HepG2 (cell line): ENCODE measurements at regions of chr7 and their contacts with region 1.

Region 1: GRCh38 chr7:94657771-94658693 is 2.1 kb upstream of the SGCE start:
- DNase-seq: peak; percentile 90
- ATAC-seq: peak; percentile 89
- H3K4me3 ChIP-seq: peak overlapping the region in 2 of 3 experiments; percentile 55 to 78
- H3K27ac ChIP-seq: peak overlapping the region; percentile 77
- H3K4me1 ChIP-seq: peaks cover 22% of the 10 kb centered on the region
- H3K27me3 ChIP-seq: no peaks in the 10 kb centered on the region
- CTCF ChIP-seq: peak; percentile 32
- EP300 ChIP-seq: no peak
- POLR2A ChIP-seq: peak in 1 of 2 experiments; percentile 44; a peak in 1 of 4 replicates
- RAD21 ChIP-seq: no peak

Region 2: DNA sequence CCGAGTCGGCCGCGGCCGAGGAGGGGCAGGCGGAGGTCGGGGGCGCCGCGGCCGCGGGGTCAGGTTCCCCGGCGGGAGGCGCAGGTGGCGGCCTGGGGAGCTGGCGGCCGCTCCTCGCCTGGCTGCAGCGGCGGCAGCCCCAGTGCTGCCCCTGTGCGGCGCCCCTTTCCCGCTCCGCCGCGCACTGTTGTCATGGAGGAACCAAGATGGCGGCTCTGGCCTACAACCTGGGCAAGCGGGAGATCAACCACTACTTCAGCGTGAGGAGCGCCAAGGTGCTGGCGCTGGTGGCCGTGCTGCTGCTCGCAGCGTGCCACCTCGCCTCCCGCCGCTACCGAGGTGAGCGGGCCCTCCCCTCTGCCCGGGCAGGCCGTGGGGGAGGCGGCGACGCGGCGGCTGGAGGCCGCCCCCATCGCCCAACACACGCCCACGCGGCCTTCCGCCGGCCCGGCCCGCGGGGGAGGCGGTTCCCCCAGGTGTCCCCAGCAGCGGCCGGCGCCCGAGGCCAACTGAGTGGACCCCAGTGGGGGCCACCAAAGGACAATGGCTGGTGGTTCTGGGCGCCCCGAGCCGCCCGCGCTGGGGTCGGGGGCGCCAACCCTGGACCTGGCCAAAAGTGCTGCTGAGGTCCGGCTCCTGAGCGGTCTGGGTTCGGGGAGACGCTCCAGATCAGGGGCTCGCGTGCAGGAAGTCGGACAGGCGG is 148.0 kb before region 1 on chr7:
- CTCF ChIA-PET with region 1: no interaction called
- POLR2A ChIA-PET with region 1: interaction called, 7 read pairs
- in situ Hi-C with region 1: no loop called
- intact Hi-C with region 1: loop called (anchors 1 kb)
- DNase-seq: peak; percentile 59
- ATAC-seq: peak; percentile 86
- H3K4me3 ChIP-seq: peak overlapping the region; percentile 66 to 83 (median 83)
- H3K27ac ChIP-seq: peak overlapping the region; percentile 96
- H3K4me1 ChIP-seq: peaks cover 73% of the 10 kb centered on the region
- H3K27me3 ChIP-seq: no peaks in the 10 kb centered on the region
- CTCF ChIP-seq: peak; percentile 45
- EP300 ChIP-seq: no peak
- POLR2A ChIP-seq: peak; percentile 77 to 80
- RAD21 ChIP-seq: peak; percentile 63

Region 3: GRCh38 chr7:94632338-94633013 is 25.6 kb before region 1 on chr7:
- CTCF ChIA-PET with region 1: no interaction called
- POLR2A ChIA-PET with region 1: interaction called, 23 read pairs
- in situ Hi-C with region 1: no loop called
- intact Hi-C with region 1: no loop called
- DNase-seq: no peak
- ATAC-seq: peak; percentile 72
- H3K4me3 ChIP-seq: peak overlapping the region in 1 of 3 experiments; percentile 3; a peak in 1 of 6 replicates
- H3K27ac ChIP-seq: peak overlapping the region; percentile 69
- H3K4me1 ChIP-seq: peaks cover 77% of the 10 kb centered on the region
- H3K27me3 ChIP-seq: no peaks in the 10 kb centered on the region
- CTCF ChIP-seq: no peak
- EP300 ChIP-seq: no peak
- POLR2A ChIP-seq: no peak
- RAD21 ChIP-seq: no peak

Region 4: GRCh38 chr7:94907026-94907810 is 249.2 kb after region 1 on chr7 and contains the start of gene PPP1R9A:
- CTCF ChIA-PET with region 1: no interaction called
- POLR2A ChIA-PET with region 1: interaction called, 5 read pairs
- in situ Hi-C with region 1: no loop called
- intact Hi-C with region 1: loop called (anchors 5 kb)
- DNase-seq: peak; percentile 63
- ATAC-seq: peak; percentile 87
- H3K4me3 ChIP-seq: peak within 1 kb of the TSS; percentile 66 to 88 (median 81)
- H3K27ac ChIP-seq: peak within 1 kb of the TSS; percentile 81
- H3K4me1 ChIP-seq: peaks cover 48% of the 10 kb centered on the region
- H3K27me3 ChIP-seq: no peaks in the 10 kb centered on the region; a peak in 1 of 5 replicates
- CTCF ChIP-seq: peak; percentile 70
- EP300 ChIP-seq: peak in 1 of 2 experiments; percentile 45; a peak in 1 of 4 replicates
- POLR2A ChIP-seq: 0 out of 4 replicates have a peak, but pooled peaks of 1 of the 2 experiments have one; percentile 45
- RAD21 ChIP-seq: peak; percentile 75
- total RNA-seq, gene PPP1R9A: 18.2 and 31.9 TPM in 2 replicates

Region 5: DNA sequence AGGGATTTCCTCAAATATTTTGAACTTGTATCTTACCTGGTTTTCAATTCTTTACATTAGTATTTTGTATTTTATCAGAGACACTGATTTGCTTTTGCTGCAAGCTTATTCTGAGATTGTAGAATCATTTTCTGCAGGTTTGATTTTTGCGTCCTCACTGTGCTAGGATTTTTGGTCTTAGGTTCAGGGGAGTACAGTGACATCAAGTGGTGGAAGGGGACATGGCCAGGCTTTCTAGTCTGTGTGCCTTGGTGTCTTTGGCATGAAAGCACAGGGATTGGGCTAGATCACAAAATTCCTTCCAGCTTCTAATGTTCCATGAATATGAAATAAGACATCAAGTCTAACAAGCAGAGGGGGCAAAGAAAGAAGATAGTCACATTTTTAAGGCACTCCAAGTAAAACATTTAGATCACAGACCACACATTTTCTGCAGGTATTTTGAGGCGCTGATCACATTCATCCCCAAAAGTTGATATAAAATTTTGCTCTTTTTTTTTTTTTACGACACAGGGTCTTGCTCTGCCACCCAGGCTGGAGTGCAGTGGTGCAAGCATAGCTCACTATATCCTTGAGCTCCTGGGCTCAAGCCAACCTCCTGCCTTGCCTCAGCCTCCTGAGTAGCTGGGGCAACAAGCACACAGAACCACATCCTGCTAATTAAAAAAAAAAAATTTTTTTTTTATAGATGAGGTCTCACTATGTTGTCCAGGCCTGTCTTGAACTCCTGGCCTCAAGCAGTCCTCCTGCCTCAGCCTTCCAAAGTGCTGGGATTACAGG is 541.9 kb after region 1 on chr7:
- CTCF ChIA-PET with region 1: no interaction called
- POLR2A ChIA-PET with region 1: no interaction called
- in situ Hi-C with region 1: no loop called
- intact Hi-C with region 1: loop called (anchors 5 kb)
- DNase-seq: peak; percentile 49
- ATAC-seq: peak; percentile 87
- H3K4me3 ChIP-seq: no peak overlapping the region
- H3K27ac ChIP-seq: no peak overlapping the region
- H3K4me1 ChIP-seq: no peaks in the 10 kb centered on the region
- H3K27me3 ChIP-seq: no peaks in the 10 kb centered on the region
- CTCF ChIP-seq: peak; percentile 78
- EP300 ChIP-seq: no peak
- POLR2A ChIP-seq: no peak
- RAD21 ChIP-seq: peak; percentile 49; the same call in 1 of the 2 replicates